ENCODE measurements at regions of chr11 and their contacts with region 1.

Region 1: GRCh38 chr11:46308631-46309419 is 31.4 kb downstream of the CREB3L1 start:
- DNase-seq: peak; percentile 60
- H3K4me3 ChIP-seq: no peak overlapping the region
- H3K27ac ChIP-seq: no peak overlapping the region
- H3K4me1 ChIP-seq: no peaks in the 10 kb centered on the region
- H3K27me3 ChIP-seq: no peaks in the 10 kb centered on the region
- CTCF ChIP-seq: peak; percentile 92 to 93
- POLR2A ChIP-seq: no peak

Region 2: GRCh38 chr11:45872513-45873356 is 436.1 kb before region 1 on chr11:
- CTCF ChIA-PET with region 1: no interaction called
- POLR2A ChIA-PET with region 1: no interaction called
- dilution Hi-C with region 1: no loop called
- intact Hi-C with region 1: loop called (anchors 1 kb)
- DNase-seq: peak; percentile 57
- H3K4me3 ChIP-seq: no peak overlapping the region
- H3K27ac ChIP-seq: no peak overlapping the region
- H3K4me1 ChIP-seq: no peaks in the 10 kb centered on the region
- H3K27me3 ChIP-seq: no peaks in the 10 kb centered on the region
- CTCF ChIP-seq: peak; percentile 70 to 84
- POLR2A ChIP-seq: no peak

Region 3: DNA sequence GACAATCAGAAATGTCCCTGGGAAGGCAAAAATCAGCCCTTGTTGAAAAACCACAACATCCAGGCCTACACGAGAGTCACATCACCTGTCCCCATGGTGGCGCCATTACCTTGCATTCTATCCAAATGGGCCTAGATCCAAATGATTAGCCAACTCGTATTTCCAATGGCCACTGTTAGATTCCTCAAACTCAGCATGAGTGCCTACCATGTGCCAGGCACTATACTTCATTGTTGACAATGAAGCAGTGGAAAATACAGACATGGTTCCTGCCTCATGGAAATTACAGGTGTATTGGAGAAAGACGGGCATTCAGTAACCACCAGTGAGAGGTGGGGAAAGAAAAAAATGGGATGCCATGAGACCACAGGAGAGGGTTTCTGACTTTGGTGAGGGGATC is 61.2 kb before region 1 on chr11:
- CTCF ChIA-PET with region 1: interaction called, 367 read pairs
- POLR2A ChIA-PET with region 1: no interaction called
- dilution Hi-C with region 1: no loop called
- intact Hi-C with region 1: loop called (anchors 1 kb)
- DNase-seq: peak; percentile 58
- H3K4me3 ChIP-seq: no peak overlapping the region
- H3K27ac ChIP-seq: no peak overlapping the region
- H3K4me1 ChIP-seq: peaks cover 10% of the 10 kb centered on the region
- H3K27me3 ChIP-seq: no peaks in the 10 kb centered on the region
- CTCF ChIP-seq: peak; percentile 24 to 42
- POLR2A ChIP-seq: no peak

Region 4: DNA sequence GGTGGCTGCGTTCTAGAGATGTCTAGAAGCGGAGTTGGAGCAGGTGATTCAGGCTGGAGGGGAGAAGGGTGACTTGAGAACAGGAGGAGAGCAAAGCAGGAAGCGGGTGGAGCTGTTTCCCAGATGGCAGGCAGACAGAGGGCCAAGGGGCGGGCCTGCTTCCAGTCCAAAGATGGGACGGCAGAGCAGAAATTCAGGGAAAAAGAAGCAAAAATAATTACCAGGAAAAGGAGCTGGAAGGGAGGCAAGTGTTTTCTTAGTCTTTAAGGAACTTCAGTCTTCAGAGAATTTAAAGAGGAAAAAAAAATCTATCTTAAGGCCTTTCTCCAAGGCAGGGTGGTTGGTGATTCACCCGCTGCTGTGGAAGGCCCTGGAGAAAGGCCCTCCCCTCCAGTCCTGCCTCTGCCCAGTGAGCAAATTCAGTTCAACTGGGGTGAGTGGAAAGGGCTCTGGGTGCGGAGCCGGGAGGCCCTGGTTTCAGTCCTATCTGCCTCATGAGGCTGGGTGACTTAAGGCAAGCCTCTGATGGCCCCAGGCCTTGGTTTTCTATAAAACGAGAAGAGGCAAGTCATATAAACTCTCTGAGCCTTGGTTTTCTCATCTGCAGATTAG is 35.9 kb before region 1 on chr11:
- CTCF ChIA-PET with region 1: interaction called, 27 read pairs
- POLR2A ChIA-PET with region 1: no interaction called
- dilution Hi-C with region 1: no loop called
- intact Hi-C with region 1: no loop called
- DNase-seq: peak; percentile 43
- H3K4me3 ChIP-seq: no peak overlapping the region
- H3K27ac ChIP-seq: no peak overlapping the region
- H3K4me1 ChIP-seq: peaks cover 10% of the 10 kb centered on the region
- H3K27me3 ChIP-seq: peaks cover 9 to 10% of the 10 kb centered on the region in 2 experiments
- CTCF ChIP-seq: no peak
- POLR2A ChIP-seq: no peak

Region 5: DNA sequence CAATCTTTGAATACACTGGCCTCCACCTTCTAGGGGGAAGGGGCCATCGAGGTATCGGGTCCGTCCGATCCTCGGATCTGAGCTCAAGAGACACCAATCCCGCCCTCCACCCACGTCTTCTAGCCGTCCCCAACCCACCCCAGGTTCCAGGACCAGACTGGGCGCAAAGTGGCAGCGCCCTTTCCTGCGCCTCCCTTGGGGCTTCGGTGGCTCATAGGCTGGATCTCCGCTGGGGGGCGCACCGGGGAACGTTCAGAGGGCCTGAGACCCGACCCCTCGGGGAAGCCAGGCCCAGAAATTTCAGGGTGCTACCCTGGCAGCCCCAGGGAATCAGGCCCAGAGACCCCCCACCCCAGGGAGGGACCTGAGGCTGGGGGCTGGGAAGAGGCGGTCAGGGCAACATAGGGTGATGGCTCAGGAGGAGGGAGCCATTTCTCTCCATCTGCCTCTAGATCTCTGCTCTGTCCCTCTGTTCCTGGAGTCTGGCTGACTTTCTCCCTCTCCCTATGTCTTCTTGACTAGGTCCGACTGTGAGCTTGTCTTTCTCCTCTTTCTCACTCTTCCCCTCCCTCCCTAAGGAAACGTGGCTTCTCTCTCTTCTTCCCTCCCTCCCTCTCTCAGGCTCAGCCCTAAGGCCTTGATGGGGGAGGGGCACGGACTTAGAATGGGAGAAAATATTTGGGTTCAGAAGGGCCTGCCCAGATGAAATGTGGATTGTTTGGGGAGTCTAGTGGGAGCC is 30.3 kb before region 1 on chr11:
- CTCF ChIA-PET with region 1: interaction called, 27 read pairs
- POLR2A ChIA-PET with region 1: no interaction called
- dilution Hi-C with region 1: no loop called
- intact Hi-C with region 1: no loop called
- DNase-seq: no peak
- H3K4me3 ChIP-seq: peak overlapping the region in 1 of 3 experiments; percentile 33
- H3K27ac ChIP-seq: no peak overlapping the region
- H3K4me1 ChIP-seq: peaks cover 8% of the 10 kb centered on the region
- H3K27me3 ChIP-seq: peaks cover 36 to 42% of the 10 kb centered on the region in 2 experiments
- CTCF ChIP-seq: peak in 1 of 2 donors; percentile 49
- POLR2A ChIP-seq: no peak

Region 6: GRCh38 chr11:46330890-46331652 is 22.2 kb after region 1 on chr11:
- CTCF ChIA-PET with region 1: interaction called, 15 read pairs
- POLR2A ChIA-PET with region 1: no interaction called
- dilution Hi-C with region 1: no loop called
- intact Hi-C with region 1: no loop called
- DNase-seq: no peak
- H3K4me3 ChIP-seq: no peak overlapping the region
- H3K27ac ChIP-seq: no peak overlapping the region
- H3K4me1 ChIP-seq: no peaks in the 10 kb centered on the region
- H3K27me3 ChIP-seq: peaks cover 46 to 51% of the 10 kb centered on the region in 2 experiments
- CTCF ChIP-seq: no peak
- POLR2A ChIP-seq: no peak